ENCODE measurements at regions of chr2 and their contacts with region 1.

Region 1: GRCh38 chr2:27347641-27348040 is 8.9 kb downstream of the GTF3C2 start:
- DNase-seq: no peak
- ATAC-seq: no peak; a peak in 1 of 6 replicates
- H3K4me3 ChIP-seq: no peak overlapping the region
- H3K27ac ChIP-seq: no peak overlapping the region
- H3K4me1 ChIP-seq: no peaks in the 10 kb centered on the region
- CTCF ChIP-seq: no peak
- EP300 ChIP-seq: no peak
- POLR2A ChIP-seq: no peak
- RAD21 ChIP-seq: no peak

Region 2: DNA sequence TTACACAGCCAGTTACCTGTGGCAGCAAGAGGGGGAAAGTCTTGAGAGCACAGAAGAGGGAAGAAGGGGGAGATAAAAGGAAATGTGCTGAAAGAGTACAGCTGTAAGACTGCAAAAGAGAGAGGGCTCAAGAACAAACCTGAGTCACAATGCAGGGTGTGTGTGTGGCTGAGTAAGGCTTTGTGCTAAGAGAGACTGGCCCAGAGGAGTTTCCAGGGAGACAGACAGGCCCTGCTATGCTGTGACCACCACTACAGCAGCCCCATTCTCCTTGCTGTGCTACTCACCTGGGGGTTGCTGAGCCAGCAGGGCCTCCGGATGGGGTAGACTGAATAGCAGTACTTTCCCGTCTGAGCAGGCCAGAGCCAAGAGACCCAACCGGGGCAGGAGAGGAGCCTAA is 12.3 kb before region 1 on chr2:
- CTCF ChIA-PET with region 1: interaction called, 25 read pairs
- POLR2A ChIA-PET with region 1: no interaction called
- DNase-seq: no peak
- ATAC-seq: peak; percentile 16 to 50; a peak in 4 of 6 replicates
- H3K4me3 ChIP-seq: no peak overlapping the region
- H3K27ac ChIP-seq: no peak overlapping the region
- H3K4me1 ChIP-seq: no peaks in the 10 kb centered on the region
- CTCF ChIP-seq: no peak
- EP300 ChIP-seq: no peak
- POLR2A ChIP-seq: no peak
- RAD21 ChIP-seq: no peak

Measured in A549 (cell line).